ENCODE measurements at regions of chr5 and their contacts with region 1.

Region 1: DNA sequence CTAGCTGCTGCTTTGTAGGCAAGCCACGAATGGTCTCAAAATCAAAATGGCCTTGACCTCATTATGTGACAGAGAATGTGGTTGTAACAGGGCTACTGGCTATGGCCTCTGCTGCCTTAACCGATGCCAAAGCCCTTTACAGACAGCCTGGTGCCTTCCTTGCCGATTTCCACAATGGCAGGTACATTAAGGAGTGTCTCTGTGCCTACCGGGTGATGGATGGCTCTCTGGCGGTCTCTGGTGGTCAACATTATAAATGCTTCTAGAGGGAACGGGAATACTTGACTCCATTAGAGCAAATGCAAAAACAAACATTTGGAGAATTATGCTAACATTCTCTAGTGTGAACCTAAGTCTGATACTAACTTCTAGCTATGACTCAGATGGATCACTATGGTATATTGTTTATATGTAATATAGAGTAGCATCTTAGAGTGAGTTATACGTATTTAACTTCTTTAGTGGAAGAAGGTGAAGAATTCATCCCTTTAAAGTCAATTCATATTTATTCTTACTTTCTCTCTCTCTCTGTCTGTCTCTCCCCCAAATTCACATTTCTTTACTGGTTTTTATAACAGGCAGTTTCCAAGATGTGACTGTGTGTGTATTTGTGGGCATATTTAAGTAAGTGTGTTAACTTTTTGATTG is 52.5 kb downstream of the RPS23 start:
- DNase-seq: peak; percentile 75
- ATAC-seq: peak; percentile 93
- H3K4me3 Mint-ChIP-seq: no peak overlapping the region
- H3K27ac Mint-ChIP-seq: no peak overlapping the region
- H3K4me1 Mint-ChIP-seq: no peaks in the 10 kb centered on the region
- H3K27me3 Mint-ChIP-seq: no peaks in the 10 kb centered on the region

Region 2: DNA sequence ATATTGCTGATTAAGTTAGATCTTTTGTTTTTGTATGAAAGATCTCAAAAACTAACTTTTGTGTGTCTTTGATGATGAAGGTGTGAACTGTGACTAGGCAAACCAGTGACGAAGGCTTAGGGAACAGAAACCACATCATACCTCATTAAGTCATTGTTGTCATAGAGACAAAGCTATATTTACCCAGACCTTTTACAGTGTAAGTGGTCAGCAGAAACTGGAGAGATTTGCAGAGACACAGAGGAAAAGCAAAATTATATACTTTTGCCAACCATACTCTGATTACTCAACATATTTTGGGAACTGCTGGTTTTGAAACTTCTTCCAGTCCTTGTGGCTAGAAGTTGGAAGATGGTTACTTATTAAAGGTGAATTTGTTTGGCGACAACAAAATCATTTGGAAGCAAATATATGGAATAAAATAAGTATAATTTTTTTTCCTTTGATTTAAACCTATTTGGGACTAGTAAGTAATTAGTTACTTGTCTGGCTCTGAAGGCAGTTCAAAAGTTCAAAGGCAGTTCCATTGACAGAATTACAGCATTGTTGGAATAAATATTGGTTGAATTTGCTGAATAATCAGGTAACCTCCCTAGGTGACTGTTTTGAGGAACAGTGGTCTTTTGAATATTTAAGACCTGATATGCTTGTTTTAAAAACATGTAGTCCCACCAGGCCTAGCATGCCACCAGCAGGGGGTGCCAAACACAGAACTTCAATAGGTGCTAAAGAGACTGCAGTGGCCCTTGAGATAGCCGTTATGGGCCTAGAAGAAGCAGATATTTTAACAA is 51.3 kb before region 1 on chr5:
- CTCF ChIA-PET with region 1: interaction called, 16 read pairs
- POLR2A ChIA-PET with region 1: no interaction called
- intact Hi-C with region 1: loop called (anchors 1 kb)
- DNase-seq: peak; percentile 86
- ATAC-seq: peak; percentile 71
- H3K4me3 Mint-ChIP-seq: no peak overlapping the region
- H3K27ac Mint-ChIP-seq: no peak overlapping the region
- H3K4me1 Mint-ChIP-seq: peaks cover 7% of the 10 kb centered on the region
- H3K27me3 Mint-ChIP-seq: no peaks in the 10 kb centered on the region